Right ventricle myocardium inferior (tissue), 1 donor: ENCODE measurements at regions of chr15 and their contacts with region 1.

Region 1: DNA sequence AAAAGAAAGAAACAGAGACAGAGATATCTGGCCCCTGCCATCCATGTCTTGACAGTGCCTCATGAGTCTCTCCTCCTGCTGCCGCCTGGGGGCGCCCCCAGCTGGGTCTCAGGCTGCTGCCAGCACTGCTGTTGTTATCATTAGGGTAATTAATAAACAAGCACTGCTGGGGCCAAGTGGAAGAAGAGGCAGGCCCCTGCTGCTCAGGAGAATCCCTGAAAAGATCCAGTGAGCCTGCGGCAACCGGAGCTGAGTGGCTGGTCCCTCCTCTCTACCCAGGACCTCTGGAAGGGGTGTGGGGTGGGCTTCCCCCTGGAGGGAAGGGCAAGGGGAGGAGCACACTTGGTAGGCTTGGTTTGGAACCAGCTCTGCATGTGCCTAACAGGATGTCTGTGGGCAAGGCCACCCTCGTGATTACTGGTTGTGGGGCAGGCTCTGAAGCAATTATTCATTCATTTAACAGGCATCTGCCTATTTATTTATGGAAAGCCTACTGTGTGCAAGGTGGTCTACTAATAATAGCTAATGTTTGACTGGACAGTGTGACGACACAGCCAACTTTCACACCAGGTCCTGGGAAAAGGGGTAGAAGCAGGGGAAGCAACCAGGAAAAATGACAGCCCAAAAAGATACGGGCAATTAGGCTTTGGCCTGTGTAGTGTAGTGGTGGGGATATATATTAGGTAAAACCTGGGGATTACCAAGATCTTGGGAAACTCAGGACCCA is 1.2 kb upstream of the TYRO3 start:
- DNase-seq: no peak
- ATAC-seq: peak; percentile 53

Region 2: GRCh38 chr15:41377978-41378377 is 179.9 kb before region 1 on chr15:
- intact Hi-C with region 1: no loop called
- DNase-seq: no peak
- ATAC-seq: no peak

Region 3: DNA sequence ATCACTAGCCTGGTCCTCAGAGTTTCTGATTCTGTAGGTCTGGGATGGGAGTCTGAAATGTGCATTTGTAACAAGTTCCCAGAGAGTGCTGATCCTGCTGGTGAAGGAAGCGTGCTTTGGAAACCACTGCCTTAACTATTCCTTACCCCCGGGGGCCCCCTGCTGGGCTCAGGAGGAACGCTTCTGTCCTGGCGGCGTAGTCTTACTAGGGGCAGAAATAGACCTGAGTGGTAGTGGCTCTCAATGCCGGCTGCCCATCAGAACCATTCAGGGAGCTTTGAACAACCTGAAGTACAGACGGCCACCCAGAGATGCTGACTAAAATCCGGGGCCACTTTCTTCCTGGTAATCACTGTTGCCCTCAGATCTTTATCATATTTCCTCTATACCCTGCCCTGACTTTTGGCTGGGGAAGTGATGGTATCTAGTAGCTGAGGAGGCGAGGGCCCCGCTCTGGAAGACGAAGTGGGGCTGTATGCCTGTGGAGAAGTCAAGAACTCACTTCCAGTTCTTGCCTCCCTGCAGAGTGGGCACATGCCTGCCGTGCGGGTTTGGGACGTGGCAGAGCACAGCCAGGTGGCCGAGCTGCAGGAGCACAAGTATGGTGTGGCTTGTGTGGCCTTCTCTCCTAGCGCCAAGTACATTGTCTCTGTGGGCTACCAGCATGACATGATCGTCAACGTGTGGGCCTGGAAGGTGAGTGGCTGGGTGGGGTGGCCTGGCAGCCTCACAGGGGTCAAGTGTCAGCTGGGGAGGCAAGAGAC is 253.8 kb after region 1 on chr15:
- intact Hi-C with region 1: loop called (anchors 5 kb)
- DNase-seq: peak; percentile 88
- ATAC-seq: peak; percentile 91